ENCODE measurements at regions of chr1 and their contacts with region 1.

Region 1: DNA sequence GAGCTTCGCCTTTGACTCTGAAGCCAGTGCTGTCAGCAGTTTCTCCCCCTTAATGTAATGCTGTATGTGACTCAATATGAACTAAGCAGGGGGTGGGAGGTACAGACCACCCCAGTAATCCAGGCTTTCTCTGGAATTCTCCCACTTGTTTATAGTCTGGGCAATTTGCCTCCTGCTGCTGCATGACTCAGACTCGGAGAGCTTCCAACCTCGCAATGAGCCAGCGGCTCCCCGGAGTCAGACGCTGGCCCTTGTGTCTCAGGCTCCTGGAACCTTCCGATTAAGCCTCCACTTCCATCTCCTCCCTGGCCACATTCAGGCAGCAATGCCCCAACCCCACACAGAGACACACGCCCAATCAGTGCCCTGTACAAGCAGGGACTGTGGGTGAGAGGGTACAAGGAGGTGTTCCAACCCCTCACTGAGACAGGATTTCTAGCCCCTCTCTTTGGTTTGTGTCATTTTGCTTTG is 471.7 kb upstream of the VAMP3 start:
- DNase-seq: peak; percentile 100
- ATAC-seq: peak; percentile 82
- H3K4me3 ChIP-seq: peak overlapping the region; percentile 12; the same call in 1 of the 2 replicates
- H3K27ac ChIP-seq: peak overlapping the region; percentile 90
- H3K4me1 ChIP-seq: peaks cover 18% of the 10 kb centered on the region
- H3K27me3 ChIP-seq: no peaks in the 10 kb centered on the region
- CTCF ChIP-seq: no peak
- POLR2A ChIP-seq: peak; percentile 60; the same call in 1 of the 2 replicates
- RAD21 ChIP-seq: peak; percentile 40

Region 2: DNA sequence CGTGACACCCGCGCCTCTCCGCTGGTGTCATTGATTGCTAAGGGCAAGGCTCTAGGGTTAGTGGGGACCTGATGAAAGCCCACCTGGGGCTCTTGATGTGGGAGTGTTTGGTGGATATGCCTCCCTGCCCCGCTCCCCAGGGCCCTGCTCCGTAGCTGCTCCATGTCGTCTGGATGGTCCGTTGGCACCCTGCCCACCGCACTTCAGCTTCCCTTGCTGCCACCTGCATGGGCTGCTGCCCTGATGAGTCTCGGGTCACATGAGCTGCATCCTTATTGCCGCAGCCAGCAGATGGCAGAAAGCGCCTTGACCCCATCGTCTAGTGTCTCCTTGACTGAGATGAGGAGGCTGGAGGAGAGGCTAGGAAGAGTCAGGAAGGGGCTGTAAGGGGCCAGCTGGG is 74.7 kb before region 1 on chr1:
- CTCF ChIA-PET with region 1: no interaction called
- POLR2A ChIA-PET with region 1: no interaction called
- dilution Hi-C with region 1: no loop called
- in situ Hi-C with region 1: no loop called
- intact Hi-C with region 1: loop called (anchors 5 kb)
- DNase-seq: no peak
- ATAC-seq: no peak
- H3K4me3 ChIP-seq: no peak overlapping the region
- H3K27ac ChIP-seq: no peak overlapping the region; the same call in 1 of the 2 replicates
- H3K4me1 ChIP-seq: peaks cover 9% of the 10 kb centered on the region
- H3K27me3 ChIP-seq: no peaks in the 10 kb centered on the region
- CTCF ChIP-seq: no peak
- POLR2A ChIP-seq: no peak
- RAD21 ChIP-seq: no peak

Region 3: DNA sequence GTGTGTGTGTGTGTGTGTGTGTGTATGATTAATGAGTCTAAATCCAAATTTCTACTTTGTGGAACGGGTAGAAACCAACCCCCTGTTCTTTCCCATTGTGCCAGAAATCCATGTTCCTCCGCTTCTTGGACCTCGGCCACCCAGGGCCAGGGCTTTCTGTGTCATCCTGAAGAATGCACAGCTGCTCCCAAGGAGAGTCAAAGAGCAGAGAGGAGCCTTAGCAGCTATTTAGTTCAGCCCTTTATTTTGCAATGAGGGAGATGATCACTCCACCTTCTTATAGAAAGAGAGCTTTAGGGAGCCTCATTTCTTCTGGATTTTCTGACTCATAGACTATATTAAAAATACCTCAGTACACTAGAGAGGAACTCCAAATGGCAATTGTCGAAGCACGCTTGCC is 17.5 kb before region 1 on chr1:
- CTCF ChIA-PET with region 1: interaction called, 3 read pairs
- POLR2A ChIA-PET with region 1: interaction called, 13 read pairs
- dilution Hi-C with region 1: no loop called
- in situ Hi-C with region 1: no loop called
- intact Hi-C with region 1: no loop called
- DNase-seq: peak; percentile 95
- ATAC-seq: peak; percentile 87
- H3K4me3 ChIP-seq: no peak overlapping the region
- H3K27ac ChIP-seq: peak overlapping the region; percentile 19
- H3K4me1 ChIP-seq: peaks cover 32% of the 10 kb centered on the region
- H3K27me3 ChIP-seq: no peaks in the 10 kb centered on the region
- CTCF ChIP-seq: no peak
- POLR2A ChIP-seq: no peak
- RAD21 ChIP-seq: no peak

Region 4: DNA sequence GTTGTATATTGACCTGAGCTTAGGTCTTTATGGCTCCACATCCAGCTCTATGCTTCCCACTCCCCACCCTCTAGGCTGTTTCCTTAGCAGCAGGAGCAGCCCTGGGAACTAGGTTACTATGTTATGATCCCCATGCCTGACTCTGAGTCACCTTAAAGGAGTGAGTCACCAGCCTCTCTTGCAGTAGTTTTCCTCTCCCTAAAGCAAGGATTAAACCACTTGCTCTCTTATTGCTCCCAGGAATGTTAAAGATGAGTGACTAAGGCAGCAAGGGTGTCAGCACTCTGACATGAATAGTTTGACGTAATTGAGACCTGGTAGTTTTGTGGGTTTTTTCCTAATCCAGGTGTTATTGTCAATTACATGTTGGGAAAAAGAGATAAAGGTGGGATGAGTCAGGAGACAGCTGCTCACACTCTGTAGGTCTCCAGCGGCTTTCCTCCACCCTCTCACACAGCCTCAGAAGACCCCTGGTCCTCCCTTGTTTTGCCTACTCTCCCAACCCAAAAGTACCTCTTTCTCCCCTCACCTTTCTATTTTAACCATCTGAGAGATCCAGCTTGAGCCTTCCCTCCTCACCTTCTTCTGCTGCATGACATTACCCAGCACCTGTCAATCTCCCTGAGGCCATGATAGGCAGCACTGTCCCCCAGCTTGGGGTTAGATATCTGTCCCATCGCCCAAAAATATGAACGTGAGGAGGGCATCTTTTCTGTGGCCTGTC is 102.6 kb after region 1 on chr1:
- CTCF ChIA-PET with region 1: no interaction called
- POLR2A ChIA-PET with region 1: no interaction called
- dilution Hi-C with region 1: no loop called
- in situ Hi-C with region 1: no loop called
- intact Hi-C with region 1: loop called (anchors 5 kb)
- DNase-seq: peak; percentile 100
- ATAC-seq: peak; percentile 98
- H3K4me3 ChIP-seq: no peak overlapping the region
- H3K27ac ChIP-seq: peak overlapping the region; percentile 35
- H3K4me1 ChIP-seq: peaks cover 8% of the 10 kb centered on the region
- H3K27me3 ChIP-seq: no peaks in the 10 kb centered on the region
- CTCF ChIP-seq: no peak
- POLR2A ChIP-seq: no peak
- RAD21 ChIP-seq: peak; percentile 44

Region 5: GRCh38 chr1:7470880-7471638 is 171.7 kb after region 1 on chr1:
- CTCF ChIA-PET with region 1: no interaction called
- POLR2A ChIA-PET with region 1: no interaction called
- dilution Hi-C with region 1: no loop called
- in situ Hi-C with region 1: no loop called
- intact Hi-C with region 1: loop called (anchors 10 kb)
- DNase-seq: peak; percentile 99
- ATAC-seq: peak; percentile 79
- H3K4me3 ChIP-seq: no peak overlapping the region
- H3K27ac ChIP-seq: peak overlapping the region; percentile 97
- H3K4me1 ChIP-seq: peaks cover 28% of the 10 kb centered on the region
- H3K27me3 ChIP-seq: no peaks in the 10 kb centered on the region
- CTCF ChIP-seq: no peak
- POLR2A ChIP-seq: 0 out of 2 replicates have a peak, but pooled peaks have one; percentile 19
- RAD21 ChIP-seq: peak; percentile 36